ENCODE measurements at regions of chr5 and their contacts with region 1.

Region 1: DNA sequence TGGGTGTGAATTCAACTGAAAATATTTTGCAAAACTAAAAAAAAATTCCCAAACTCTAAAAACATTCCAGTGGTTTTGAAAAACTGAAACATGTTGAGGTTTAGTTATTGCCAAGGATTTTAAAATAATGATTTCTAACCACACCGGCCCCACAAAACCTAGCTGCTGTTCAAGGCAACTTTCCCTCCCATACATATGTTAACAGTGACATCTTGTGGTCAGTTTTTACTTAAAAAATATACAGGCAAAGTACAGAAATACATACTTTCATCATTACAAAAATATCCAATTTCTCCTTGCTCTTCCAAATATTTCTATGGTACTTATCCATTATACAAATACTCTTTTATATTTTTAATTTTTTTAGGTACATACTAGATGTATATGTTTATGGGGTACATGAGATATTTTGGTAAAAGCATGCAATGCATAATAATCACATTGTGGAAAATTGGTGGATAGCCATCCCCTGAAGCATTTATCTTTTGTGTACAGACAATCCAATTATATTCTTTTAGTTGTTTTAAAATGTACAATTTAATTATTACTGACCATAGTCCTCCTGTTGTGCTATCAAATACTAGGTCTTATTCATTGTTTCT is 34.4 kb upstream of the MRPS30 start:
- DNase-seq: peak; percentile 22
- ATAC-seq: peak; percentile 17
- H3K4me3 ChIP-seq: no peak overlapping the region
- H3K4me3 Mint-ChIP-seq: no peak overlapping the region
- H3K27ac ChIP-seq: no peak overlapping the region
- H3K27ac Mint-ChIP-seq: no peak overlapping the region
- H3K4me1 ChIP-seq: no peaks in the 10 kb centered on the region
- H3K4me1 Mint-ChIP-seq: no peaks in the 10 kb centered on the region
- H3K27me3 ChIP-seq: no peaks in the 10 kb centered on the region
- H3K27me3 Mint-ChIP-seq: peaks cover 8% of the 10 kb centered on the region
- CTCF ChIP-seq: peak; percentile 71

Region 2: DNA sequence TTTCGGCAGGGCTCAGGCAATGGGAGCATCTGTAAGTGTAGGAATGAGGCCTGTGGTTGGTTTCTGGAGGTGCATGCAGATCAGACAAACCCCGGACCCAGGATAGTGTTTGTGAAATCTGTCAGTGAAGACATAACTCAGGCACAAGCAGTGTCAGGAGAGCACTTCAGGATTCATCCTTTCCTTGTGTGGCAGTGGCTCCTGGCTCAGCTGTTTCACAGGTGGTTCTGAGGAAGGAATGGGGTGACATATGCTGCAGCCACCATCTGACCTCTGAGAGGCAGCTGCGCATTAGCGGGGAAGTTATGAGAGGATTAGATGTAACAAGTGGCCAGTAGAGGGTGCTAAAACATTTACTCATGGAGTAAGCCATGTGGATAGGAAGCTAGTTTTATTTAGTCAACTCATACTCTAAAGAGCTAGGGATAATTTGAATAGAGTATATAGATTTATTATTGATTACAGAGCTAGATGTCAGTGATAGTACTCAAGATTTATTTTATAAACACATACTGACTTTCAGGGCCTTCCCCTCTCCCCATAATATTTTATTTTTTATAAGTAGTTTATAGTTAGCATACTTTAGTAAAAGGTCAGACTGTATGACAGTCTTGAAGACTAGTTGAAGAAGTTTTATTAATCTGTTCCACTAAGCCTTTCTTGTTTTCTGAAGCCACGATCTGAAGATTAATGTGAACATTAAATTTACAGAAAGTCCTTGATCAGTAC is 1143.0 kb before region 1 on chr5:
- CTCF ChIA-PET with region 1: interaction called, 4 read pairs
- POLR2A ChIA-PET with region 1: no interaction called
- intact Hi-C with region 1: loop called (anchors 10 kb)
- DNase-seq: peak; percentile 63
- ATAC-seq: peak; percentile 67
- H3K4me3 ChIP-seq: no peak overlapping the region
- H3K4me3 Mint-ChIP-seq: no peak overlapping the region
- H3K27ac ChIP-seq: no peak overlapping the region
- H3K27ac Mint-ChIP-seq: no peak overlapping the region
- H3K4me1 ChIP-seq: no peaks in the 10 kb centered on the region
- H3K4me1 Mint-ChIP-seq: peaks cover 2% of the 10 kb centered on the region
- H3K27me3 ChIP-seq: no peaks in the 10 kb centered on the region
- H3K27me3 Mint-ChIP-seq: no peaks in the 10 kb centered on the region
- CTCF ChIP-seq: peak; percentile 71

Region 3: GRCh38 chr5:43729846-43730478 is 1044.4 kb before region 1 on chr5:
- CTCF ChIA-PET with region 1: interaction called, 6 read pairs
- POLR2A ChIA-PET with region 1: no interaction called
- intact Hi-C with region 1: loop called (anchors 2 kb)
- DNase-seq: no peak
- ATAC-seq: no peak
- H3K4me3 ChIP-seq: no peak overlapping the region
- H3K4me3 Mint-ChIP-seq: no peak overlapping the region
- H3K27ac ChIP-seq: no peak overlapping the region
- H3K27ac Mint-ChIP-seq: no peak overlapping the region
- H3K4me1 ChIP-seq: no peaks in the 10 kb centered on the region
- H3K4me1 Mint-ChIP-seq: no peaks in the 10 kb centered on the region
- H3K27me3 ChIP-seq: no peaks in the 10 kb centered on the region
- H3K27me3 Mint-ChIP-seq: peaks cover 6% of the 10 kb centered on the region
- CTCF ChIP-seq: peak; percentile 67

Region 4: GRCh38 chr5:44536650-44537260 is 237.6 kb before region 1 on chr5:
- CTCF ChIA-PET with region 1: no interaction called
- POLR2A ChIA-PET with region 1: no interaction called
- intact Hi-C with region 1: loop called (anchors 5 kb)
- DNase-seq: peak; percentile 2
- ATAC-seq: no peak
- H3K4me3 ChIP-seq: no peak overlapping the region
- H3K4me3 Mint-ChIP-seq: no peak overlapping the region
- H3K27ac ChIP-seq: no peak overlapping the region
- H3K27ac Mint-ChIP-seq: no peak overlapping the region
- H3K4me1 ChIP-seq: no peaks in the 10 kb centered on the region
- H3K4me1 Mint-ChIP-seq: no peaks in the 10 kb centered on the region
- H3K27me3 ChIP-seq: no peaks in the 10 kb centered on the region
- H3K27me3 Mint-ChIP-seq: no peaks in the 10 kb centered on the region
- CTCF ChIP-seq: peak; percentile 58

Region 5: GRCh38 chr5:44787729-44788128 is 13.3 kb after region 1 on chr5:
- CTCF ChIA-PET with region 1: no interaction called
- POLR2A ChIA-PET with region 1: no interaction called
- intact Hi-C with region 1: no loop called
- DNase-seq: no peak
- ATAC-seq: no peak
- H3K4me3 ChIP-seq: no peak overlapping the region
- H3K4me3 Mint-ChIP-seq: no peak overlapping the region
- H3K27ac ChIP-seq: no peak overlapping the region
- H3K27ac Mint-ChIP-seq: no peak overlapping the region
- H3K4me1 ChIP-seq: no peaks in the 10 kb centered on the region
- H3K4me1 Mint-ChIP-seq: no peaks in the 10 kb centered on the region
- H3K27me3 ChIP-seq: no peaks in the 10 kb centered on the region
- H3K27me3 Mint-ChIP-seq: no peaks in the 10 kb centered on the region
- CTCF ChIP-seq: no peak

Region 6: GRCh38 chr5:45440466-45440865 is 666.1 kb after region 1 on chr5:
- CTCF ChIA-PET with region 1: no interaction called
- POLR2A ChIA-PET with region 1: no interaction called
- intact Hi-C with region 1: no loop called
- DNase-seq: no peak
- ATAC-seq: no peak
- H3K4me3 ChIP-seq: no peak overlapping the region
- H3K4me3 Mint-ChIP-seq: no peak overlapping the region
- H3K27ac ChIP-seq: no peak overlapping the region
- H3K27ac Mint-ChIP-seq: no peak overlapping the region
- H3K4me1 ChIP-seq: no peaks in the 10 kb centered on the region
- H3K4me1 Mint-ChIP-seq: no peaks in the 10 kb centered on the region
- H3K27me3 ChIP-seq: no peaks in the 10 kb centered on the region
- H3K27me3 Mint-ChIP-seq: no peaks in the 10 kb centered on the region
- CTCF ChIP-seq: no peak

Measured in B cell (primary cell).